ENCODE measurements at regions of chr7 and their contacts with region 1.

Region 1: DNA sequence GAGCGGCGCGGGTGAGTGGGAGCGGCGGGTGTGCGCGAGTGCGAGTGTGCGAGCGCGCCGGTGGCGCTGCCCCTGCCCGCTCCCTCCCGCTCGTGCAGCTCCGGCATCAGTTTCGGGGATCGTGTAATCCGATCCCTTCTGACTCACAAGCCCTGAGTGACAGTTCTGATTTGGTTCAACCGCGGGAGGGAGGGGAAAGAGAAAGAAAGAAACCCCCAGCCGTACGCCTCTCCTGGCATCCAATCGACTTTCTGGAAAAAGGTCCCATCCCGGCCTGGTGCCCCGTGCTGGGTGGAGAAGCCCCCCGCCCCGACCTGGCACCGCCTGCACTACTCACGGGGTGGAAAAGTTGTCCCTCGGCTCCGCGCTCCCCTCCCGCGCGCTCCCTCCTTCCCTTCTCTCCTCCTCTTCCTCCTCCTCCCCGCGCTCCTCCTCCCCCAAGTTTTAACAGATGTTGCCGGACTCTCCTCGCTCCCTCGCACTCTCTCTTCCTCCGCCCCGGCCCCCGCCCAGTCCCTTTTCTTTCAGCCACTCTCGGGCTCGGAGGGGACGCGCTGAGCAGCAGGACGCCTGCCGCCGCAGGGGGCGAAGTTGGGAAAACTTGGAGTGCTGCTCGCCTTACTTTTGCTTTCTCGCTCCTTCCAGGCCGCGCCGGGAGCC is at the start of gene GLI3:
- DNase-seq: peak; percentile 93
- ATAC-seq: peak; percentile 65
- H3K4me3 ChIP-seq: peak within 1 kb of the TSS; percentile 55
- H3K27ac ChIP-seq: peak within 1 kb of the TSS; percentile 90
- H3K4me1 ChIP-seq: peaks cover 9% of the 10 kb centered on the region
- H3K27me3 ChIP-seq: no peaks in the 10 kb centered on the region
- CTCF ChIP-seq: peak; percentile 36; the same call in 1 of the 2 replicates
- POLR2A ChIP-seq: peak; percentile 47
- RAD21 ChIP-seq: no peak
- total RNA-seq, gene GLI3: 1.3 and 1.7 TPM in 2 replicates

Region 2: DNA sequence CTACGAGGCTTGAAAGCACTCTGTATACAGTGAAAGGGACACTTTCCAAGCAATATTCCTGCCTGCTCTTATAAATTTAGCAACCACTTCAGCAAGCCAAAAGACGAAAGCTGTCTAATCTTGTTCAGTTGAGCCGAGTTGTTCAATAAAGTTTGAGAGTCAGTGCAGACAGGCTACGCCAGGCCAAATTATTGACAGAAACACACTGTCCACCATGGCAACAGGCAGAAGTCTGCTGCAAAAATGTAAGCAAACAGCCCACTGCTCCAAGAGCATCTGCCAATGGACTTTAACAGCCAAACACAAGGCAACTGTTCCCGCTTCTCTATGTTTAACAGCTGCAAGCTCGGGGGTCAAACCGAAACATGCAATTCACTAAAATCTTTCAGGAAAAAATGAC is 86.0 kb before region 1 on chr7:
- CTCF ChIA-PET with region 1: no interaction called
- POLR2A ChIA-PET with region 1: no interaction called
- dilution Hi-C with region 1: no loop called
- in situ Hi-C with region 1: no loop called
- intact Hi-C with region 1: loop called (anchors 5 kb)
- DNase-seq: peak; percentile 71
- ATAC-seq: peak; percentile 58
- H3K4me3 ChIP-seq: no peak overlapping the region
- H3K27ac ChIP-seq: no peak overlapping the region
- H3K4me1 ChIP-seq: peaks cover 6% of the 10 kb centered on the region; the same call in 1 of the 2 replicates
- H3K27me3 ChIP-seq: no peaks in the 10 kb centered on the region
- CTCF ChIP-seq: no peak
- POLR2A ChIP-seq: no peak
- RAD21 ChIP-seq: no peak

Region 3: GRCh38 chr7:42175834-42176723 is 61.2 kb before region 1 on chr7:
- CTCF ChIA-PET with region 1: no interaction called
- POLR2A ChIA-PET with region 1: no interaction called
- dilution Hi-C with region 1: no loop called
- in situ Hi-C with region 1: no loop called
- intact Hi-C with region 1: no loop called
- DNase-seq: no peak
- ATAC-seq: peak; percentile 35; the same call in 1 of the 2 replicates
- H3K4me3 ChIP-seq: no peak overlapping the region
- H3K27ac ChIP-seq: no peak overlapping the region
- H3K4me1 ChIP-seq: peaks cover 6% of the 10 kb centered on the region
- H3K27me3 ChIP-seq: no peaks in the 10 kb centered on the region
- CTCF ChIP-seq: no peak
- POLR2A ChIP-seq: no peak
- RAD21 ChIP-seq: no peak

Region 4: GRCh38 chr7:42690794-42691639 is 453.7 kb after region 1 on chr7:
- CTCF ChIA-PET with region 1: no interaction called
- POLR2A ChIA-PET with region 1: no interaction called
- dilution Hi-C with region 1: no loop called
- in situ Hi-C with region 1: no loop called
- intact Hi-C with region 1: loop called (anchors 5 kb)
- DNase-seq: peak; percentile 39
- ATAC-seq: peak; percentile 84
- H3K4me3 ChIP-seq: no peak overlapping the region
- H3K27ac ChIP-seq: no peak overlapping the region
- H3K4me1 ChIP-seq: no peaks in the 10 kb centered on the region
- H3K27me3 ChIP-seq: no peaks in the 10 kb centered on the region; the same call in 1 of the 2 replicates
- CTCF ChIP-seq: peak; percentile 48
- POLR2A ChIP-seq: no peak
- RAD21 ChIP-seq: peak; percentile 58

Region 5: DNA sequence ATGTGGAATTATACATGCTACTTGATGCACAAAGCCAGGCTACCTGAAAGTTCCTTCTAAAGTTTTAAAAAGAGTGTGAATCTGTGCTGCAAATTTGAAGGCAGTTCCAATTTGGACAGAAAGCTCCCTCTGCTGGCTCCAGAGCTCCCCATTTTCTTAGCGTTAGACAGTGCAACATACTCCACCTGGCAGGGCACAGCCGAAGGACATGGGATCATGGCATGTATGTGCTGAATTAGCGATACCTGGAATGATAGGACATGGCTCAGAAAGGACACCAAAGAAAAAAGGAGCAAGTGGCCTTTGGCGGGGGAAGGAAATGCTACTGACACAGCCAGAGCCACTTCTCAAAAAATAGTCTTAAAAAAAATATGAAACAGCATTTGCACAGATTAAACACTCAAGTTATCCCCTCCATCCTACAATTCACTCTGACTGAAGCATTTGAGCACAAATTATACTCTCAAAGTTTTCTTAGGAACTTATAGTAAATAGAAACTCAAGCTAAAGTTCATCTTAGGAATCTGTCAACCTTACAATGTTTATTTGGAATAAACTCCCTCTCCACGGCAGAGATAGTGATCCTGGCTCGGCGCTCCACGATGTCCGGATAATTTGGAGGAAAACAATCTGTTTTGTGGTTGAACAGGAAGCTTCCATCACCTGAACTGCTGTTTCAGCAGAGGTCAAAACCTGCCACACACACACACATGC is 594.6 kb after region 1 on chr7:
- CTCF ChIA-PET with region 1: no interaction called
- POLR2A ChIA-PET with region 1: no interaction called
- dilution Hi-C with region 1: no loop called
- in situ Hi-C with region 1: no loop called
- intact Hi-C with region 1: loop called (anchors 5 kb)
- DNase-seq: peak; percentile 36
- ATAC-seq: peak; percentile 87
- H3K4me3 ChIP-seq: no peak overlapping the region
- H3K27ac ChIP-seq: no peak overlapping the region
- H3K4me1 ChIP-seq: peaks cover 8% of the 10 kb centered on the region; the same call in 1 of the 2 replicates
- H3K27me3 ChIP-seq: peaks cover 11% of the 10 kb centered on the region
- CTCF ChIP-seq: peak; percentile 58
- POLR2A ChIP-seq: no peak
- RAD21 ChIP-seq: peak; percentile 53